AG04450 (cell line): ENCODE measurements at regions of chr10 and their contacts with region 1.

Region 1: DNA sequence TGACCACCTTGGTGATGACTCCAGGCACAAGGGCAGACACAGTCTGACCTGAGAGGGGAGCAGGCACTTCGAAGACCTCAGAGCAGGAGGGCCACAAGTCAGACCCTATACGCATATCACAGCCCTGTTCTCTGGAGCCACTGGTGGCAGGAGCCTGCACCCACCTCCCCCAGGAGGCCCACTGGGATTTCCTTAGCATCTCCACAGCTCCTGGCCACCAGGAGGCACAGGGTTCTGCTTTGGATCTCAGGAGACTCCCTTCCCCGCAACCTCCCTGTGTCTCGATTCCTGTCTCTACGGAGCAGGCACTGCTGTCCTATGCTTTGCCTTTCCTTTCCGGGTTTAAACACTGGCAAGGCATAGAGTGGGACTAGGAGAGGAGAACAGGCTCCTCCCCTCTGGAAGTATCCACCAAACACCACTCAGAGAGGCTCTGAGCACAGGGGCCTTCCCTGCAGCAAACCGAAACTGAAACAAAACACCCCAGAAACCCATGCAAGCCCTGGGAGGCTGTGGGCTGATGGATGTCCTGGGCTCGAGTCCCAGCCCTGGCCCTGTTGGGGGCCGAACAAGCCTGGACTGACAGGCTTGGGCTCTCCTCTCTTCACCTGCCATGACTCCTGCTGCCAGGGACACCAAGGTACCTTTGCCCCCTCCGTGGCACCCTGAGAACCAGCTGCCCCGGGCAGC is 166.3 kb downstream of the NEURL1 start:
- DNase-seq: peak; percentile 69
- H3K4me3 ChIP-seq: peak overlapping the region; percentile 80
- H3K27ac ChIP-seq: peak overlapping the region; percentile 83
- H3K27me3 ChIP-seq: no peaks in the 10 kb centered on the region
- CTCF ChIP-seq: peak; percentile 32; the same call in 1 of the 2 replicates

Region 2: DNA sequence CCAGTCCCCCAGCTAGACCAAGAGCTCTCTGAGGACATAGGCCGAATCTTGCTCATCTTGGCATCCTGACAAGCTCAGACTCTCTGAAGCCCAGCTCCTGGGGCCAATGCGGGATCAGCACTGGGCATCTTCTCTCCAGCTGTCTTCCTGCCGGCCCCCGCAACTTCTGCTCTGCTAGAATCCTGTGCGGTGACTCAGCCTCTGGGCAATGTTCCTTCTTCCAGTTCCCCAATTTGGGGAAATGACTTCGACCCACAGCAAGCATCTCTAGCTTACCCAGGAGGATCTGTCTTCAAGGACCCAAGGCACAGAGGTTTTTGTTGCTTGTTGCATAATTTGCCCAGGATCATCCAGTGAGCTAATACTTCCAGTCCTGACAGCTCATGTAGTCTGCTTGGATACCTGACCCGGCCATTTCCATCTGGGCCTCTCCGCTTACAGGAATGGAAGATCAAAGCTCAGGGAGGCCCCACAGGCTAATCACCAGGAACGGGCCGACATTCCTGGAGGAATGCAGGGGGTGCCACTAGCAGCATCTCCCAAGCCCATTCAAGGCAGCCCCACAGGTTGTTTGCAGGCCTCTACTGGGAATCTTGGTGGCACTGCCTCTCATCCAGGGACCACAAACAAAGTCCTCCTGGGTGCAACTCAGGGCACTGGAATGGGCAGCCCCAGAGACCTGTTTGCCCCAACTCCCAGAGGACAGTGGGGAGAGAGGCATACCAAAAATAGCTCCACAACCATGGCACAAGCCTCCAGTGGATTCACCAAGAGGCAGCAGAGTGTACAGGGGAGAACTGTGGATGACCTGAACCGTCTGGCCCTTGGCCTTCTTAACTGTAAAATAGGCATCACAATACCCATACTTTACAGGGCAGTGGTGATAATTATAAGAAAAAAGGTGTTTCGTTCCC is 14.4 kb before region 1 on chr10:
- CTCF ChIA-PET with region 1: interaction called, 5 read pairs
- POLR2A ChIA-PET with region 1: interaction called, 18 read pairs
- DNase-seq: peak; percentile 96
- H3K4me3 ChIP-seq: no peak overlapping the region
- H3K27ac ChIP-seq: peak overlapping the region; percentile 87
- H3K27me3 ChIP-seq: no peaks in the 10 kb centered on the region
- CTCF ChIP-seq: no peak

Region 3: DNA sequence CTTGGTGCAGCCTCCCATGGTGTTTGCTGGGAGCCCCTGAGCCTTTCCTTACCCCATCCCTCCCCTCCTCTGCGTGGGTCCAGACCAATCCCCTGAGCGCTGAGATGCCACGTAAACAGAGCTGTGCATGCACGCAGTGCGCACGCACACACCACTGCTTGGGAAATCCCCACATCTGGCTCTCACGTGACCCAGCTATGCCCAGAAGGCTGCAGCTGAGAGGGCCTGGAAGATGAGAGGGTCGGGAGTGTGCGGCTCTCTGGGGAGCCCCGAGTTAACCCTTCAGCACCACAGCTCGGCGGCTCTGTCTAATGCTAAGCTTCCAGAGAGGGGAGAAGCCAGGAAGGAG is 18.3 kb after region 1 on chr10:
- CTCF ChIA-PET with region 1: interaction called, 3 read pairs
- POLR2A ChIA-PET with region 1: interaction called, 19 read pairs
- DNase-seq: peak; percentile 99
- H3K4me3 ChIP-seq: peak overlapping the region; percentile 75
- H3K27ac ChIP-seq: peak overlapping the region; percentile 100
- H3K27me3 ChIP-seq: no peaks in the 10 kb centered on the region
- CTCF ChIP-seq: no peak

Region 4: GRCh38 chr10:103772096-103772845 is 112.5 kb after region 1 on chr10:
- CTCF ChIA-PET with region 1: no interaction called
- POLR2A ChIA-PET with region 1: no interaction called
- DNase-seq: peak; percentile 99
- H3K4me3 ChIP-seq: peak overlapping the region; percentile 43
- H3K27ac ChIP-seq: peak overlapping the region; percentile 53
- H3K27me3 ChIP-seq: no peaks in the 10 kb centered on the region
- CTCF ChIP-seq: no peak